ENCODE measurements at regions of chr6 and their contacts with region 1.

Region 1: GRCh38 chr6:30828027-30828960 is 56.0 kb upstream of the DDR1 start:
- DNase-seq: peak; percentile 88
- H3K4me3 Mint-ChIP-seq: peak overlapping the region; percentile 86
- H3K27ac Mint-ChIP-seq: peak overlapping the region; percentile 75
- H3K4me1 Mint-ChIP-seq: peaks cover 69% of the 10 kb centered on the region
- H3K27me3 Mint-ChIP-seq: no peaks in the 10 kb centered on the region

Region 2: GRCh38 chr6:30013291-30013922 is 814.9 kb before region 1 on chr6:
- CTCF ChIA-PET with region 1: no interaction called
- DNase-seq: peak; percentile 67
- H3K4me3 Mint-ChIP-seq: no peak overlapping the region
- H3K27ac Mint-ChIP-seq: no peak overlapping the region
- H3K4me1 Mint-ChIP-seq: no peaks in the 10 kb centered on the region
- H3K27me3 Mint-ChIP-seq: peaks cover 24% of the 10 kb centered on the region

Region 3: GRCh38 chr6:30862156-30862875 is 34.0 kb after region 1 on chr6:
- CTCF ChIA-PET with region 1: interaction called, 10 read pairs
- DNase-seq: no peak
- H3K4me3 Mint-ChIP-seq: no peak overlapping the region
- H3K27ac Mint-ChIP-seq: no peak overlapping the region
- H3K4me1 Mint-ChIP-seq: no peaks in the 10 kb centered on the region
- H3K27me3 Mint-ChIP-seq: peaks cover 9% of the 10 kb centered on the region

Region 4: GRCh38 chr6:30877419-30878371 is 49.4 kb after region 1 on chr6:
- CTCF ChIA-PET with region 1: interaction called, 174 read pairs
- DNase-seq: peak; percentile 84
- H3K4me3 Mint-ChIP-seq: peak overlapping the region; percentile 50
- H3K27ac Mint-ChIP-seq: peak overlapping the region; percentile 79
- H3K4me1 Mint-ChIP-seq: peaks cover 26% of the 10 kb centered on the region
- H3K27me3 Mint-ChIP-seq: peaks cover 23% of the 10 kb centered on the region

Region 5: DNA sequence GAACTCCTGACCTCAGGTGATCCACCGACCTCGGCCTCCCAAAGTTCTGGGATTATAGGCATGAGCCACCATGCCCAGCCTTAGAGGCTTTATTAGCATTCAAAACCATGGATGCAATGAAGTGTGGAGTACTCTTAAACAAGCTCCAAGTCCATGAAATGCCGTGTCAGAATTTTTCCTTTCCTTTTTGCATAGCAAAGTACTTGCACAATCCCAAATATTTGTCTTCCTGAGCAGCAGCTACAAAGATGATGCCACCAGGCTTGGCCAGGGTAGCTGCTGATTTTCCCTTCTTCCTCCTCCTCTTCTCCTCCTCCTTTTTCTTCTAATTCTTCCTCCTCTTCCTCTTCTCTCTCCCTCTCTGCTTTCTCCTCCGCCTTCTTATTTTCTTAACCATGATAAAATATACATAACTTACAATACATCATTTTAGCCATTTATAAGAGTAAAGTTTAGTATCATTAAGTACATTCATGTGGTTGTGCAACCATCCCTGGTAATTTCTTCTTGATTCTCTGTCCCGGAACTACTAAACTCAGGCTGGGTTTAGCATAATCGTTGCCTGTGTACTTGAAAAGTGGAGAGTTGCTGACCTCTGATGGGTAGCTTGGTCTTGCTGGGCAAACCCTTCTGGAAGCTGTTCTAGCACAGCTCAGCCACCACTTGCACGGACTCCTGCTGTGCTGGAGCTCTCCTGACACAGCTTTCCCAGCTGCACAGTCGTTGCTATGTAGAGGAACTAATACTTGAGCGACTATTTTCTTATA is 132.8 kb after region 1 on chr6:
- CTCF ChIA-PET with region 1: no interaction called
- DNase-seq: no peak
- H3K4me3 Mint-ChIP-seq: no peak overlapping the region
- H3K27ac Mint-ChIP-seq: no peak overlapping the region
- H3K4me1 Mint-ChIP-seq: peaks cover 19% of the 10 kb centered on the region
- H3K27me3 Mint-ChIP-seq: peaks cover 71% of the 10 kb centered on the region

Region 6: DNA sequence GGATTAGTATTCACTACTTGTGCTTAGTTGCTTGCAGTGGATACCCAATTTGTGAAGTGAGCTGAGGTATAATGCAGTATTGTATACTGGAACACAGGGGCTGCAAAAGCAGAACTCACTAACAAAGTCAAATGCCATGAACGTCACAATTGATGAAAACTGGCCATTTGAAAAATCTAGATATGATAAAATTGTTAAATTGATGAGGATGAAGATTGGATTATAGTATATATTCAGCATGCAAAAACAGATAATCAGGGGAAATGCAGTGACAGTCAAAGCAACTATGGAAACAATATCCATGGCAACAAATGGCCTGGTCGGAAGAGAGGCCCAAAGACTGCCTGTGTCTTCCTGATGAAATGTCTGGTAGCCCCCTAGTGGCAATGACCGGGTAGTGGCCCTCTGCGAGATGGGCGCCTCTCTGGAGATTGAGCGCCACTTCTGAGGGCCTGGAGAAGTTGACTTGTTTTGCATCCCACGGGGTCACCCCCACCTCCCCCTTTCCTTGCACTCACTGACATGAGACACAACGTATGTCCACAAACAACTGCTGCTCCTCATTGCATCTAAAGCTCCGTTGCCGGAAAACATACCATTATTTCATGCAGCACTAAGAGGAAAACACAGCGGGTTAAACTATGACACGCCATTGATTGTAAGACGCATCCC is 240.5 kb after region 1 on chr6:
- CTCF ChIA-PET with region 1: interaction called, 17 read pairs
- DNase-seq: peak; percentile 78
- H3K4me3 Mint-ChIP-seq: no peak overlapping the region
- H3K27ac Mint-ChIP-seq: no peak overlapping the region
- H3K4me1 Mint-ChIP-seq: no peaks in the 10 kb centered on the region
- H3K27me3 Mint-ChIP-seq: peaks cover 7% of the 10 kb centered on the region

Measured in activated naive CD4-positive, alpha-beta T cell treated with anti-CD3 and anti-CD28 coated beads, Interleukin-2, amount 10 ng/mL, durations not matched to agents 7 days and 5 days (primary cell).